CD8-positive, alpha-beta T cell (primary cell): ENCODE measurements at regions of chr10 and their contacts with region 1.

Region 1: GRCh38 chr10:133309111-133309719 is 501 bp downstream of the ZNF511 start:
- DNase-seq: peak; percentile 87 to 97 (median 91)
- ATAC-seq: peak; percentile 82
- H3K4me3 ChIP-seq: peak overlapping the region; percentile 56 to 72
- H3K4me3 Mint-ChIP-seq: peak overlapping the region; percentile 99
- H3K27ac ChIP-seq: peak overlapping the region; percentile 97 to 99
- H3K27ac Mint-ChIP-seq: peak overlapping the region; percentile 90
- H3K4me1 ChIP-seq: peaks cover 18% of the 10 kb centered on the region
- H3K4me1 Mint-ChIP-seq: peaks cover 32% of the 10 kb centered on the region
- H3K27me3 ChIP-seq: no peaks in the 10 kb centered on the region
- H3K27me3 Mint-ChIP-seq: no peaks in the 10 kb centered on the region
- CTCF ChIP-seq: no peak

Region 2: DNA sequence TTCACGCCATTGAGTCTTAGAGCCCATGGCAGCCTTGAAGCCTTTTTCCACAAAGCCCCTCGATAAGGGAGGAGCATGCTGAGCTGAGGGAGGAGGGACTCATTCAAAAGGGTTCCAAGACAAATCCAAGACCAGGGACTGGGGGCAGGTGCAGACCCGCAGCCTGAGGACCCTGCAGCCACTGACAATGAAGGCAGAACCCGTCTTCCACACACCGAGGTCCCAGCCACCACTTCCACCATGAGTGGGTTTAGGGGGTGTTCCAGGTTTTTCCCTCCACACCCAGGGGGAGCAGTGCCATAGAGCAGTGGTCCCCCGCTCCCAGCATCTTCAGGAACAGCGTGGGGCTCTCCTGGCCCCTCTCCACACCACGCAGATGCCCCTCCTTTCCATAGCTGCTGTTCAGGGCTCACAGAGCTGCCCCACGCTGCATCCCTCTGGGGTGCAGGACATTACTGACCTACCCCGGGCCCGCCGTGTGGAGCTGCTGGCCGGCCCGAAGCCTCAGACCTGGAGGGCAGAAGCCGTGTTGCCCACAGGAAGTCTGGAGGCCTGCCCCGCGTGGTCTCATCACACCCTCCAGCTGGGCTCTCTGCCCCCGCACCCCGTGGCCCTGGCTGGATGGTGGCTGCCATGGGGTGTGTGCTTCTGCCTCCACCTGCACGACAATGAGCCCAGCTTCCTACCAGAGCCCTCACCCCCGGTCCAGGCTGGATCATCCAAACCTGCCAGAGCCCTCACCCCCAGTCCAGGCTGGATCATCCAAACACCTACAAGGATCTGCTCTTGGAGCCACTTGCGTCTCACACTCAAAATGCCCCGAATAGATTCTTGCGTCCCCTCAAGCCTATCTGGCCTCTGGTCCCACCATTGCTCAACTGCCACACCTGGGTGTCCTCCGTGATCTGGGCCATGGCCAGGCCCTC is 1777.7 kb before region 1 on chr10:
- CTCF ChIA-PET with region 1: no interaction called
- POLR2A ChIA-PET with region 1: no interaction called
- intact Hi-C with region 1: no loop called
- DNase-seq: no peak
- ATAC-seq: no peak
- H3K4me3 ChIP-seq: no peak overlapping the region
- H3K4me3 Mint-ChIP-seq: no peak overlapping the region
- H3K27ac ChIP-seq: no peak overlapping the region
- H3K27ac Mint-ChIP-seq: no peak overlapping the region
- H3K4me1 ChIP-seq: no peaks in the 10 kb centered on the region
- H3K4me1 Mint-ChIP-seq: no peaks in the 10 kb centered on the region
- H3K27me3 ChIP-seq: no peaks in the 10 kb centered on the region
- H3K27me3 Mint-ChIP-seq: no peaks in the 10 kb centered on the region
- CTCF ChIP-seq: no peak

Region 3: DNA sequence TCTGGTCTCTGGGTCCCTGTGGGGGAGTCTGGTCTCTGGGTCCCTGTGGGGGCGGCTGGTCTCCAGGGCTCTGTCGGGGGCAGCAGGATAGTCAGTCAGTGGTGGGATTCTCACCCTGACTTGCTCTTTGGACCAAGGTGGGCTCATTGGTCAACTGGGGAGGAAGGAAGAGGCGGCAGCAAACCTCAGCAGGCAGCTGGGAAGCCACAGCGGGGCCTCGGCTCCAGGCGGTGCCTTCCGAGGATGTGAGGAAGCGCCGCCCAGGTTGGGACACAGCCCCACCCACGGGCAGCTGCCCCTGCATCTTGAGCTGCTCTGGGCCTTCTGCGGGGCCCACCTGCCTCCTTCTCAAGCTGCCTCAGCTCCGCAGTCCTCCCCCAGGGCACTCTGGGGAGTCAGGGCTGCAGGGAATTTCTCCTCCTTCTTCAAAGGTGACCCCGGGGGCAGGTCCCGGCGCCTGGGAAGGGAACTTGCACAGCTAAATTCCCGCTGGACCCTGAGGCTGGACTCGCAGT is 169.6 kb before region 1 on chr10:
- CTCF ChIA-PET with region 1: interaction called, 12 read pairs
- POLR2A ChIA-PET with region 1: no interaction called
- intact Hi-C with region 1: loop called in 1 of 2 experiments (anchors 2 kb)
- DNase-seq: peak in 2 of 9 experiments; percentile 2 to 37
- ATAC-seq: no peak
- H3K4me3 ChIP-seq: no peak overlapping the region
- H3K4me3 Mint-ChIP-seq: no peak overlapping the region
- H3K27ac ChIP-seq: no peak overlapping the region
- H3K27ac Mint-ChIP-seq: no peak overlapping the region
- H3K4me1 ChIP-seq: no peaks in the 10 kb centered on the region
- H3K4me1 Mint-ChIP-seq: peaks cover 2% of the 10 kb centered on the region
- H3K27me3 ChIP-seq: peaks cover 0 to 2% of the 10 kb centered on the region in 2 experiments
- H3K27me3 Mint-ChIP-seq: peaks cover 16% of the 10 kb centered on the region
- CTCF ChIP-seq: no peak

Region 4: GRCh38 chr10:133278577-133279265 is 30.5 kb before region 1 on chr10:
- CTCF ChIA-PET with region 1: interaction called, 16 read pairs
- POLR2A ChIA-PET with region 1: interaction called, 4 read pairs
- intact Hi-C with region 1: loop called in 1 of 2 experiments (anchors 2 kb)
- DNase-seq: peak; percentile 46 to 92 (median 75)
- ATAC-seq: peak; percentile 37
- H3K4me3 ChIP-seq: peak overlapping the region in 1 of 2 experiments; percentile 30
- H3K4me3 Mint-ChIP-seq: peak overlapping the region; percentile 79
- H3K27ac ChIP-seq: peak overlapping the region; percentile 58 to 94
- H3K27ac Mint-ChIP-seq: peak overlapping the region; percentile 95
- H3K4me1 ChIP-seq: peaks cover 50% of the 10 kb centered on the region
- H3K4me1 Mint-ChIP-seq: peaks cover 40% of the 10 kb centered on the region
- H3K27me3 ChIP-seq: no peaks in the 10 kb centered on the region
- H3K27me3 Mint-ChIP-seq: no peaks in the 10 kb centered on the region
- CTCF ChIP-seq: no peak

Region 5: GRCh38 chr10:133329491-133330202 is 20.4 kb after region 1 on chr10:
- CTCF ChIA-PET with region 1: interaction called, 24 read pairs
- POLR2A ChIA-PET with region 1: no interaction called
- intact Hi-C with region 1: no loop called
- DNase-seq: peak; percentile 75 to 94 (median 89)
- ATAC-seq: peak; percentile 81
- H3K4me3 ChIP-seq: peak overlapping the region; percentile 4 to 6
- H3K4me3 Mint-ChIP-seq: no peak overlapping the region
- H3K27ac ChIP-seq: no peak overlapping the region
- H3K27ac Mint-ChIP-seq: no peak overlapping the region
- H3K4me1 ChIP-seq: peaks cover 13% of the 10 kb centered on the region
- H3K4me1 Mint-ChIP-seq: peaks cover 9% of the 10 kb centered on the region
- H3K27me3 ChIP-seq: peaks cover 23 to 33% of the 10 kb centered on the region in 2 experiments
- H3K27me3 Mint-ChIP-seq: peaks cover 28% of the 10 kb centered on the region
- CTCF ChIP-seq: peak; percentile 96

Region 6: GRCh38 chr10:133378251-133379096 is 69.3 kb after region 1 on chr10:
- CTCF ChIA-PET with region 1: interaction called, 3 read pairs
- POLR2A ChIA-PET with region 1: no interaction called
- intact Hi-C with region 1: loop called (anchors 1 to 2 kb)
- DNase-seq: peak in 8 of 9 experiments; percentile 36 to 78 (median 60)
- ATAC-seq: peak; percentile 61
- H3K4me3 ChIP-seq: peak overlapping the region; percentile 85 to 95
- H3K4me3 Mint-ChIP-seq: peak overlapping the region; percentile 87
- H3K27ac ChIP-seq: peak overlapping the region; percentile 40 to 43
- H3K27ac Mint-ChIP-seq: peak overlapping the region; percentile 66
- H3K4me1 ChIP-seq: peaks cover 17% of the 10 kb centered on the region
- H3K4me1 Mint-ChIP-seq: peaks cover 10% of the 10 kb centered on the region
- H3K27me3 ChIP-seq: no peaks in the 10 kb centered on the region
- H3K27me3 Mint-ChIP-seq: no peaks in the 10 kb centered on the region
- CTCF ChIP-seq: no peak

Region 7: DNA sequence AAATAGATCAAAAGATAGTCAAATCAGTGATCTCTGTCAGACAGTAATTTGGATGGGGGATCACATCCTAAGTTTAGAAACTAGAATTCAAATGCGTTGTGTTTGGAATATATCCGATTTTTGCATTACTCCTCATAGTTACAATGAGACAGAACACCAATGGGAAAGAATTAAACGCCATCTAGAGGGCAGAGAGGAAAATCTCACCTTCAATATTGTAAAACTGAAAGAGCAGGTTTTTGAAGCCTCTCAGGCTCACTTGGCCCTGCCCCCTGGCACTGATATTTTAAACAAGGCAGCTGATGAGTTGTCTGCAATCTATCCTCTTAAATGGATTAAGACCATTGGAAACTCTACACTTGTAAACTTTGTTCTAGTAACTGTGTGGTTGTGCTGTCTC is 299.6 kb after region 1 on chr10:
- CTCF ChIA-PET with region 1: no interaction called
- POLR2A ChIA-PET with region 1: no interaction called
- intact Hi-C with region 1: loop called in 1 of 2 experiments (anchors 5 kb)
- DNase-seq: peak in 2 of 9 experiments; percentile 20 to 28
- ATAC-seq: no peak
- H3K4me3 ChIP-seq: no peak overlapping the region
- H3K4me3 Mint-ChIP-seq: no peak overlapping the region
- H3K27ac ChIP-seq: no peak overlapping the region
- H3K27ac Mint-ChIP-seq: no peak overlapping the region
- H3K4me1 ChIP-seq: no peaks in the 10 kb centered on the region
- H3K4me1 Mint-ChIP-seq: no peaks in the 10 kb centered on the region
- H3K27me3 ChIP-seq: no peaks in the 10 kb centered on the region
- H3K27me3 Mint-ChIP-seq: peaks cover 31% of the 10 kb centered on the region
- CTCF ChIP-seq: peak; percentile 48